PC-9 (cell line): ENCODE measurements at regions of chr6 and their contacts with region 1.

Region 1: GRCh38 chr6:108260809-108261569 is at the start of gene SNX3:
- DNase-seq: peak; percentile 90 to 97
- H3K4me3 ChIP-seq: peak within 1 kb of the TSS; percentile 70
- H3K27ac ChIP-seq: peak within 1 kb of the TSS; percentile 89
- H3K4me1 ChIP-seq: peaks cover 18% of the 10 kb centered on the region
- H3K27me3 ChIP-seq: no peaks in the 10 kb centered on the region
- CTCF ChIP-seq: no peak
- total RNA-seq, gene SNX3: 71.8 and 102 TPM in 2 replicates

Region 2: DNA sequence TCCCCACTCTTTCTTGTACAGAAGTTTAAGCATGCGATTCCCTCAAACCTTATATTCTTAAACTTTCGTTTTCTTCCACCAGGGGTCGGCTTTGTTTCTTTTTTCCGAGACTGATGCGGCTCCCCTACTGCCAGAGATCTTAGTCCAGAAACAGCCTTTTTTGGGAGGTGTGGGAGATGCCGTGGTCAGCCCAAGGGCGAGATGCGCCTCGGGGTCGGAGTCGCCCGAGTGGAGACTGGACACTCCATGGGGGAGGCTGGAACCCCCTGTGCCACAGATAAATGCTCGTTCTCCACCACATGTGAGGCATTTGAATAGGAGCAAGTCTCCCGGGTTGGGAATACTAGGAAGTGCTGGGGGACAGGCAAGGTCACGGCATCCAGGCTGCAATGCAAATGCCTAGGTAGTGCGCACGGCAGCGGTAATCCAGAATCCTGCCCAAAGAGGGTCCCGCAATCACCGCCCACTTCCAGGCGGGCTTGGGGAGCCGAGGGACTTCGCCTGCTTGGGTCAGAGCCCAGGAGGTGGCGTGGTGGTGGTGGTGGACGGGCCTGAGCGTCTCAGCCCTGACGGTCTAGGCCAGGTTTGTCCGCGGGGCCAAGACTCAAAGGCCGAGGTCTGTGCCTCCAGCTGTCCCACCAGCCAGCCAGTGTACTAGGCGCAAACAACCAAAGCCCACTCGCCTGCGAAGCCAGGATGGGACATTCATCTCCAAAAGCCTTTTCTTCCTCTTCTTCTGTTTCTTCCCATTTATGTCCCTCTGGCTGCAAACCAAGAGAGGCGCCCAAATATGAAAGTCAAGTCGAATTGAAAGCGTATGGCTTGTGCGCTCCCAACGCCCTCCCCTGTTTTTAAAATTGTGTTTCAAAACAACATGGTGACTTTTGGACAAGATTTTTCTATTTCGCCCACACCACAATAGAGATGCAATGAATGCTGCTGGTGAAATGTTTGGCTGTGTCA is 147.2 kb before region 1 on chr6:
- CTCF ChIA-PET with region 1: no interaction called
- POLR2A ChIA-PET with region 1: no interaction called
- intact Hi-C with region 1: loop called (anchors 5 kb)
- DNase-seq: peak; percentile 23 to 59
- H3K4me3 ChIP-seq: 0 out of 2 replicates have a peak overlapping the region, but pooled peaks have one; percentile 8
- H3K27ac ChIP-seq: no peak overlapping the region
- H3K4me1 ChIP-seq: no peaks in the 10 kb centered on the region
- H3K27me3 ChIP-seq: peaks cover 5% of the 10 kb centered on the region; the same call in 1 of the 2 replicates
- CTCF ChIP-seq: peak; percentile 87

Region 3: GRCh38 chr6:108294727-108295625 is 34.0 kb after region 1 on chr6 and contains the start of gene AFG1L:
- CTCF ChIA-PET with region 1: no interaction called
- POLR2A ChIA-PET with region 1: interaction called, 10 read pairs
- intact Hi-C with region 1: loop called (anchors 1 kb)
- DNase-seq: peak; percentile 84 to 93
- H3K4me3 ChIP-seq: peak within 1 kb of the TSS; percentile 80
- H3K27ac ChIP-seq: peak within 1 kb of the TSS; percentile 83
- H3K4me1 ChIP-seq: peaks cover 7% of the 10 kb centered on the region
- H3K27me3 ChIP-seq: no peaks in the 10 kb centered on the region
- CTCF ChIP-seq: no peak
- total RNA-seq, gene AFG1L: 8.9 and 13.4 TPM in 2 replicates

Region 4: DNA sequence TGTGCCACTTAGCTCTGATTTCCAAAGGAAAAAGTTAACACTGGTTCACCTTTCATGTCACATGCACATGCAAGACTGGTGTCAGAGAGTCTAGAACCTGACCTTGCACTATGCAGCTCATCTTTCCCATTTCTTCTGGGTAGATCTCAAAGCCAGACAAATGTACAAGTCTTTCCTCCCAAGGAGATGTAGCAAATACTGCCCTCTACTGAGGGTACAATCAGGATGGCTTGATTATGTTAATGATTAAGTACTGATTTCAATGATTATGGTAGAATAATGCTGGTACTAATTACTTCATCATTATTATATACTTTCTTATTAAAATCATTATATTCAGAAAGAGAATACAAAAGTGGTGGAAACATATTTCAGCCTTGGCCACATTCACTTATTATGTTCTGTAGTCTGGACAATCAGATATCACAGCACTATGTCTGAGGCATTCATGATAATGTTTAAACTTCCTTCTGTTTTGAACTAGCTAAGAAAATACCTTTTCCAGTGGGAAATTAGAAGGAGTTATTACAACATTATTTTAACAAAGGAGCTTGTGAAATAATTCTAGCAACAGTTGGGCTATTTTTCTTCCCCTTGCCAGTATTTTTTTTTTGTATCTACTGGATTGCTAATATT is 231.3 kb after region 1 on chr6:
- CTCF ChIA-PET with region 1: no interaction called
- POLR2A ChIA-PET with region 1: interaction called, 13 read pairs
- intact Hi-C with region 1: loop called (anchors 1 kb)
- DNase-seq: peak; percentile 1 to 53
- H3K4me3 ChIP-seq: no peak overlapping the region
- H3K27ac ChIP-seq: no peak overlapping the region
- H3K4me1 ChIP-seq: no peaks in the 10 kb centered on the region
- H3K27me3 ChIP-seq: no peaks in the 10 kb centered on the region
- CTCF ChIP-seq: peak; percentile 87